IMR-90 (cell line): ENCODE measurements at regions of chr5 and their contacts with region 1.

Region 1: DNA sequence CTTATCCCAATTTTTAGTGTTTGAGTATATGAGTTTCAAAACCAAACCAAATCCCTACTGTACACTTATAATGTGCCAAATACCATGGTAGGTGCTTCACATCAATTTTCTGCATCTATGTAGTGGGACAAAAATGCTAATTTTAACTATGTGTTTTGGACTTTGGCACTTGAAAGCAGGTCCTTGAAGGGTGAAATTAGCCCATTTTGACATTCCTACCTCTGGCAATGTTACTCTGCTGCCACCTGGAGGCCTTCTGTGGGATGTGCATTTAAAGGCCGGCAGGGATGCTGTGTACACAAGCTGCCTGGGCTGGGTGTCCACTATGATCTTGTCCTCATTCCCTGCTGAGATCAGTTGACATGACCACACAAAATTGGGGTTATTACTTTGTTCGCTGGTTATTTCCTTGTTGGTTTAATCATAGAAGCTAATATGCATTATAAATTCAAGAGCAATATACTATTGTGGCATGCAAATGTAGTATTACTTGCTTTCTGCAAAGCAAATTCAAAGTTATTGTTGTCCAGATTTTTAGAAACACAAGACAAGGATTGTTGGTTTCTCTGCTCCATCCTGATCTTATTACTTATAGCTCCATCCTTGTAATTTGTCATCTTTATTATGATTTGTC is 166.8 kb downstream of the ARHGEF28 start:
- DNase-seq: peak; percentile 76
- ATAC-seq: peak; percentile 71
- H3K4me3 ChIP-seq: no peak overlapping the region
- H3K27ac ChIP-seq: no peak overlapping the region
- H3K4me1 ChIP-seq: peaks cover 19% of the 10 kb centered on the region
- H3K27me3 ChIP-seq: no peaks in the 10 kb centered on the region
- CTCF ChIP-seq: peak; percentile 96
- POLR2A ChIP-seq: no peak
- RAD21 ChIP-seq: peak; percentile 97

Region 2: GRCh38 chr5:73693481-73694061 is 99.2 kb before region 1 on chr5:
- CTCF ChIA-PET with region 1: interaction called, 3 read pairs
- POLR2A ChIA-PET with region 1: no interaction called
- dilution Hi-C with region 1: no loop called
- in situ Hi-C with region 1: no loop called
- intact Hi-C with region 1: loop called (anchors 1 kb)
- DNase-seq: peak; percentile 49
- ATAC-seq: peak; percentile 16; the same call in 1 of the 2 replicates
- H3K4me3 ChIP-seq: no peak overlapping the region
- H3K27ac ChIP-seq: peak overlapping the region; percentile 17; the same call in 1 of the 2 replicates
- H3K4me1 ChIP-seq: peaks cover 23% of the 10 kb centered on the region
- H3K27me3 ChIP-seq: no peaks in the 10 kb centered on the region
- CTCF ChIP-seq: peak; percentile 59
- POLR2A ChIP-seq: no peak
- RAD21 ChIP-seq: peak; percentile 53

Region 3: GRCh38 chr5:73892806-73893205 is 100.0 kb after region 1 on chr5:
- CTCF ChIA-PET with region 1: no interaction called
- POLR2A ChIA-PET with region 1: no interaction called
- dilution Hi-C with region 1: no loop called
- in situ Hi-C with region 1: no loop called
- intact Hi-C with region 1: loop called (anchors 2 kb)
- DNase-seq: peak; percentile 96
- ATAC-seq: peak; percentile 88
- H3K4me3 ChIP-seq: no peak overlapping the region
- H3K27ac ChIP-seq: peak overlapping the region; percentile 53; the same call in 1 of the 2 replicates
- H3K4me1 ChIP-seq: peaks cover 4% of the 10 kb centered on the region
- H3K27me3 ChIP-seq: no peaks in the 10 kb centered on the region
- CTCF ChIP-seq: no peak
- POLR2A ChIP-seq: no peak
- RAD21 ChIP-seq: no peak

Region 4: DNA sequence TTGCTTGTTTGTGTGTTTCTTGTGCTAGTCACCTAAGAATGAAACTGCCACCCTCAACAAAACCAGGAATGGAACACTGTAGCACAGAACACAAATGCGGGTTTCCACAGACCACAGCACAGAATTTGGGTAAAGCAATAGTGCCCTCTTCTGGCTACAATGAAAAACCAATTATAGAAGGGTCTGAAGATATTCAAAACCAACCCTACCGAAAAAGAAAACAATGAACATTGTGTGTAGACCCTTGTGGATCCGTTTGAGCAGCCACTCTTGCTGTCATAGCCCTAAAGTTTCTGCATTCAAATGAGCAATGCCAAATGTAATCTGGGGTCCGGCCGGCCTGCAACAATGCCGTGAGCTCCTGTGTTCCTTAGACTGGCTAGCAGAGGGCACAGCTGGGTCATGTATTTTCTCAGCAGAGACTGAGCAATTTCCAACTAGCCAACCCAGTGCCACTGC is 856.1 kb after region 1 on chr5:
- CTCF ChIA-PET with region 1: interaction called, 5 read pairs
- POLR2A ChIA-PET with region 1: no interaction called
- dilution Hi-C with region 1: no loop called
- in situ Hi-C with region 1: loop called (anchors 10 kb)
- intact Hi-C with region 1: loop called (anchors 5 kb)
- DNase-seq: peak; percentile 65
- ATAC-seq: peak; percentile 93
- H3K4me3 ChIP-seq: peak overlapping the region; percentile 48
- H3K27ac ChIP-seq: no peak overlapping the region
- H3K4me1 ChIP-seq: peaks cover 5% of the 10 kb centered on the region
- H3K27me3 ChIP-seq: no peaks in the 10 kb centered on the region
- CTCF ChIP-seq: peak; percentile 66
- POLR2A ChIP-seq: no peak
- RAD21 ChIP-seq: peak; percentile 85